GM13976 (cell line): ENCODE measurements at regions of chr16 and their contacts with region 1.

Region 1: DNA sequence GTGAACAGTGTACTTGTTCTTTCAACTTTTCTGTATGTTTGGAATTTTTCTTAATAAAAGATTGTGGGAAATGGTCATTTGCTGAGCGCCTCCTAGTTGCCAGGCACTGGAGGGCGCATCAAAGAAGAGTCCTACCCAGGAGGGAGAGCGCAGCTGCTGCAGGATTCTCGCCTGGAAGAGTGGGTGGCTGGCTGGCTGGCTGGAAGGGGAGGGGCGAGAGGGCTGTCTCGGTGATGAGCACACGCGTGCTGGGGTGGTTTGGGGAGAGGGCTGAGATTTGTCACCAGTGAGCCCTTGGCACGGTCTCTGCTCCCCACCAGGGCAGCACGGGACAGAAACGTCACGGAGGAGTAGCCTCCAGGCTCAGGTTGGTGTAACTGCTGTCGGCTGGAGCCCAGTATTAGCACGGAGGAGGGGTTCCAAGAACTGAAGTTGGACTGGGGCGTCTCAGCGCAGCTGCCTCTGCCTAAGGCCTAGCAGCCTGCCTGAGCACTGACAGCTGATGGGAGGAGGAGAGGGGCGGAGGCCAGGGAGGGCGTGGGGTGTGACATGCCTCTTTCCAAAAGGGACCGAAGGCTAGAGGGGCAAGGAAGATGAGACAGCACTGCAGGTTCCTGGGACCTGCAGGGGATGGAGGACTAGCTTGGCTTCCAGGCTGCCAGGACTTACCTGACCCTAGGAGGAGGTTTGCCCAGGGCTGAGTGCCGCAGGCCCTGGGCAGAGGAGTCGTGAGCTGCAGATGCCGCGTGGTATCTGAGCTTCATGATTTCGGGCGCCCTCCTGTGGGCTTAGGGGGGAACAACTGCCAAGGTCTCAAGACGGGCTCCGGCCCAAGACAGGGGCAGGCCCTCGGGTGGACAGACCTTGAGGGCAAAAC is 5.7 kb downstream of the LDHD start:
- DNase-seq: peak; percentile 94
- CTCF ChIP-seq: peak; percentile 88

Region 2: DNA sequence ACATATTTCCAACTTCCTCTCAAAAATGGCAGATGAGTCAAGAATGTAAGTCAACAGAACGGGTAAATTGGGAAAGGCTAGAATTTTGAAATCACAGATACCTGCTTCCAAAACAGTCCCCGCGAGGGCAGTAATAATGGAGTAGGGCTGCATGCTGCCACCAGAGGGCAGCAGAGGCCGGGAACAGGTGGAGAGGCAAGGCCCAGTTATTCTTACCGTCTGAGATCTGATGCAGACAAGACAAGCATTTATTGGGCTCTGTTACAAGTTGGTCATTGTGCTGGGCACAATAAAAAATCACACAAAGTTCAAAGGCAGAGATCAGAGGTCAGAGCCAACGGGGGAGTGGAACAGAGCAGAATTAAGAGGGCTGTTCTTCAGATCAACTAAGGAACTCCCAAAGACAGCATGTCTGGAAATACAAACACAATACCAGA is 401.4 kb before region 1 on chr16:
- in situ Hi-C with region 1: loop called (anchors 25 kb)
- DNase-seq: peak; percentile 86
- CTCF ChIP-seq: peak; percentile 92

Region 3: GRCh38 chr16:74998481-74999218 is 112.2 kb before region 1 on chr16 and contains the start of gene ZNRF1:
- in situ Hi-C with region 1: loop called (anchors 10 kb)
- DNase-seq: peak; percentile 95
- CTCF ChIP-seq: peak; percentile 32